Activated CD8-positive, alpha-beta T cell treated with anti-CD3 and anti-CD28 coated beads, Interleukin-2, amount 10 ng/mL, durations not matched to agents 7 days and 5 days (primary cell): ENCODE measurements at regions of chrX and their contacts with region 1.

Region 1: GRCh38 chrX:15107367-15107988 is 162.4 kb downstream of the ASB9 start:
- DNase-seq: peak; percentile 21
- ATAC-seq: peak; percentile 68
- H3K4me3 Mint-ChIP-seq: no peak overlapping the region
- H3K27ac Mint-ChIP-seq: no peak overlapping the region
- H3K4me1 Mint-ChIP-seq: peaks cover 17% of the 10 kb centered on the region
- H3K27me3 Mint-ChIP-seq: peaks cover 10% of the 10 kb centered on the region

Region 2: DNA sequence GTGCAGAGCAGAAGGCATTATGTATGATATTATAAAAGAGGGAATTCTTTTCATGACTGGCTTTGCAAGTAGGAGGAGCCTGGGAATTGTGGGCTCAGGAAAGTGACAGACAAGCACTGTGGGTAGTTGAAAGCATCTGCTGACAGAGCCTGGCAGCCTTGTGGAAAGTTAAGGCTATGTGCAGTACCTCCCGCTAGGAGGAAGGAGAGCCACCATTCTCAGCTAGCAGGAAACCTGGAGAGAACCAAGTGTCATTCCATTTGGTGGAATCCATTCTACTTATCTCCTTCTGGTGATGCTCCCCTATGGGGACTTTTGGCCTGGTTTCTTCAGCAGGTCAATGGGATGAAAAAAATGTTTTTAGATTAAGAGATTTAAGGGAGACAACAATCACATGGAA is 80.6 kb after region 1 on chrX:
- CTCF ChIA-PET with region 1: no interaction called
- POLR2A ChIA-PET with region 1: no interaction called
- DNase-seq: no peak
- ATAC-seq: no peak
- H3K4me3 Mint-ChIP-seq: no peak overlapping the region
- H3K27ac Mint-ChIP-seq: no peak overlapping the region
- H3K4me1 Mint-ChIP-seq: no peaks in the 10 kb centered on the region
- H3K27me3 Mint-ChIP-seq: peaks cover 12% of the 10 kb centered on the region

Region 3: DNA sequence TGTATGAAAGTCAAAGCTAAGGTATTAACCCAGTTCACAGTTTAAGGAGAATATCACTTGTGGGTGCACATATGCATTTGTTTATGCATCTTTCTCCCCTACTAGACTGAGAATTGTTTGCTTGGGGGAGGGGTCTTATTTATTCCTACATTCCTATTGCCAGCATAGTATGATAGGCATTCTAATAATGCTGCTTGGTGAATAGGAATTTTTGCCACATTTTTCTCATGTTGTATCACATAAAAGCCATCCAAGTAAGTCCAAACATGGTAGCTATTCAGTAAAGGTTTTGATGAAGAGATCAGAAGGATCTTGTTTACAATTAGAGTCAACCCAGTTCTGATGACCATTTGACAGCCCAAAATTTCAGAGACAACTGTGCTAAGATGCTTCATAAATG is 113.8 kb after region 1 on chrX:
- CTCF ChIA-PET with region 1: no interaction called
- POLR2A ChIA-PET with region 1: no interaction called
- DNase-seq: no peak
- ATAC-seq: no peak
- H3K4me3 Mint-ChIP-seq: no peak overlapping the region
- H3K27ac Mint-ChIP-seq: no peak overlapping the region
- H3K4me1 Mint-ChIP-seq: no peaks in the 10 kb centered on the region
- H3K27me3 Mint-ChIP-seq: peaks cover 3% of the 10 kb centered on the region

Region 4: GRCh38 chrX:15242899-15243555 is 135.5 kb after region 1 on chrX:
- CTCF ChIA-PET with region 1: interaction called, 16 read pairs
- POLR2A ChIA-PET with region 1: no interaction called
- DNase-seq: peak; percentile 57
- ATAC-seq: no peak
- H3K4me3 Mint-ChIP-seq: no peak overlapping the region
- H3K27ac Mint-ChIP-seq: no peak overlapping the region
- H3K4me1 Mint-ChIP-seq: peaks cover 3% of the 10 kb centered on the region
- H3K27me3 Mint-ChIP-seq: no peaks in the 10 kb centered on the region